Calu3 (cell line): ENCODE measurements at regions of chr6 and their contacts with region 1.

Region 1: GRCh38 chr6:81752138-81752920 is at the start of gene TENT5A:
- DNase-seq: peak; percentile 94
- H3K4me3 Mint-ChIP-seq: peak within 1 kb of the TSS; percentile 98
- H3K27ac Mint-ChIP-seq: peak within 1 kb of the TSS; percentile 54
- H3K4me1 Mint-ChIP-seq: peaks cover 33% of the 10 kb centered on the region
- H3K27me3 Mint-ChIP-seq: peaks cover 9% of the 10 kb centered on the region
- CTCF ChIP-seq: no peak
- total RNA-seq, gene TENT5A: 9.7 and 17.4 TPM in 2 replicates

Region 2: DNA sequence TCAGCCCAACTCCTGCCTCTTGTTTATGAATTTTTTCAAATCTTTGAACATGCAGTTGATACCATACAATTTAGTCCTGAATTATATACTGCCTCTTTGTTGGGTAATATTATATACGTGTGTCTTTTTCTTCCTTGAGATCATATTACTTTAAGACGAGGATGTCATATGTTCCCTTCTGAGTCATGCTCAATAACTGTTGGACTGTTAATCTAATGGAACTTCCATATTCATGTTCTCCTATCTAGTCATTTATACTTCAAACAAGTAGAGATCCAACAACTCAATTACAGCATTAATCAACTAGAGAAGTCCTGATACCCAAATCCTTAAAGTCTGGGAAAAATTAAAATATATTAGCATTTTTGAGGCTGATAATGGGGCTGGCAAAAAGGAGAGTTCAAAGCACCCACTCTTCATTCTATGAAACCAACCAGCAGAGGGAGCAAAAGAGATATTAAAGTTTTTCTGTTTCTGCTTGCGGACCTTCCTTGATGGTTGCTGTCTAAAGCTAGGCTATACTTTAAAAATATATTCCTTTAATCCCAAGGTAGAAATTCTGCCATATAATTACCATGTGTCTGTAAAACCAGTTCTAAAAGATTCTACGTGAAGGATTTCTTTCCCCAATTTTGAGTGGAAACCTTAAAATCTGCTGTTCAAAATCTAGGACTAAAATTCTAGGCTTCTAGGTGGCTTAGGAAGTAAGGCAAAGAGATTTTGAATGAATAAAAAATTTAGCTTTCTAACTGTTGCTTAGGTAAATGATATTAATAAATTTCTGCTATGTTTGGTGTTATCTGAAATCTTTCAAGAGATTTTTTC is 1147.0 kb before region 1 on chr6:
- CTCF ChIA-PET with region 1: no interaction called
- intact Hi-C with region 1: loop called (anchors 5 kb)
- DNase-seq: peak; percentile 46
- H3K4me3 Mint-ChIP-seq: no peak overlapping the region
- H3K27ac Mint-ChIP-seq: peak overlapping the region; percentile 27
- H3K4me1 Mint-ChIP-seq: peaks cover 29% of the 10 kb centered on the region
- H3K27me3 Mint-ChIP-seq: no peaks in the 10 kb centered on the region
- CTCF ChIP-seq: peak; percentile 62

Region 3: DNA sequence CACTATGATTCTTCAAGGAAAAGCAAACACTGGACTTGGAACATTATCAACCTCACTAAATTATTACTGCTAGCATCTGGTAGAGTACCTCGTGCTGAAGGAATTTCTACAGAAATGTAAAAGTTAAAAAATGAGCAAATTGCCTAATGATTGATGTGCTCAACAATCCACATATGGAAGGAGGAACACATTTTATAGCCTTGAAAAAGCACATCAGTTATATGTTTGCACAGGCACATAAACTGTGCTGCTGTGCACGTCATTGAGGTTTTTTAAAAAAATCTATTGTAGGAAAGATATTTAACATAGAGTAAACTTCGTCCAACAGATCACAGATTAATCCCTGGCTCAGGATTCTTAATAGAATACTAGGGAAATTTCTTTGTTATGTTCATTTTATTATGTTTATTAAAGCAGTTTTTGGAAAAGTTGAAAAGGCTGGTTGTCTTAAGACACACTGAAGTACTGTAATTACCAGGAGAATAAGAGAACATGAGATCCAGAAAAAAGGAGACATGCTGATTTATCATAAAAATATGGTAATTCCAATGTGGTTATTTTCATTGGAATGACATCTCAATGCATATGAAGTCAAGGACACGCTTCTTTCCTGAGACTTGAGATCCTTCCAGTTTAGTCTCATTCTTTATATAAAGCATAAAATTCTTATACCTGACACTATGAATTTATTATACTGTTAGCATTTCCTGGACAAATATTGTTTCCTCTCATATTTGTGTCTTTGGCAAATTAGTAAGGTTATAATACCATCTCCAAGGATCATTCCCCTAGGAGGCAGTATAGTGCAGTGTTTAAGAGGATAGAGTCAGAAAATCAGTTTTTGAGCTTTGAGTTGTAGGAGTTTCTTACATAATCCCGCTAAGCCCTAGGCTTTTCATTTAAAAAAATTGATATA is 510.9 kb before region 1 on chr6:
- CTCF ChIA-PET with region 1: interaction called, 3 read pairs
- intact Hi-C with region 1: loop called (anchors 5 kb)
- DNase-seq: no peak
- H3K4me3 Mint-ChIP-seq: no peak overlapping the region
- H3K27ac Mint-ChIP-seq: no peak overlapping the region
- H3K4me1 Mint-ChIP-seq: no peaks in the 10 kb centered on the region
- H3K27me3 Mint-ChIP-seq: no peaks in the 10 kb centered on the region
- CTCF ChIP-seq: peak; percentile 10

Region 4: GRCh38 chr6:81562169-81562568 is 190.2 kb before region 1 on chr6:
- CTCF ChIA-PET with region 1: no interaction called
- intact Hi-C with region 1: loop called (anchors 5 kb)
- DNase-seq: peak; percentile 16
- H3K4me3 Mint-ChIP-seq: peak overlapping the region; percentile 47
- H3K27ac Mint-ChIP-seq: peak overlapping the region; percentile 66
- H3K4me1 Mint-ChIP-seq: peaks cover 16% of the 10 kb centered on the region
- H3K27me3 Mint-ChIP-seq: no peaks in the 10 kb centered on the region
- CTCF ChIP-seq: no peak

Region 5: DNA sequence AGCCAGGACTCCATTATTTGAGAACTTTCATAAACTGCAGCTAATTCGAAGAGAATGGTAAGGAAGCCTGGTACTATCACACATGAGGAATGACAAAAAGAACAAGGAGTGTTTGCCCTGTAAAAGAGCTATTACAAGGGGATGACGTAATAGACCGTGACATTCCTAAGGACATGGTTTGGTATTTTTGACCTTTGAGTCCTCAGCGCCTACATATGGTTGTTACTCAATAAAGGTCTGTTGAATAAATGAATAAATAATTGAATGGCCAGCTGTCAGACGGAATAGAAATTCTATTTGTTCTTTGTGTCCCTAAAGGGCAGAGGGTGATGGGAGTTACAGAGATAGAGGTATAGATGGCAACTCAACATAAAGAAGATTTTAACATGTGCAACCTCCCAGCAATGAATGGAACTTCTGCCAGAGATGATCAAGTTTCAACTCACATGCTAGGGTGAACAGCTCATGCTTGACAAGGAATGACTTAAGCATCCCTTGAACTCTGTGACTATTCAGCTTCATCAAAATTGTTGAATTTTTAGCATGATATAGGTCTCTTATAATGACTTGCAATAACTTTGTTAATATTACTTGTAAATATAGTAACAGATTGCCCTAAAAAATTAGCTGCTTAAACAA is 115.3 kb before region 1 on chr6:
- CTCF ChIA-PET with region 1: no interaction called
- intact Hi-C with region 1: no loop called
- DNase-seq: no peak
- H3K4me3 Mint-ChIP-seq: no peak overlapping the region
- H3K27ac Mint-ChIP-seq: no peak overlapping the region
- H3K4me1 Mint-ChIP-seq: no peaks in the 10 kb centered on the region
- H3K27me3 Mint-ChIP-seq: no peaks in the 10 kb centered on the region
- CTCF ChIP-seq: no peak

Region 6: DNA sequence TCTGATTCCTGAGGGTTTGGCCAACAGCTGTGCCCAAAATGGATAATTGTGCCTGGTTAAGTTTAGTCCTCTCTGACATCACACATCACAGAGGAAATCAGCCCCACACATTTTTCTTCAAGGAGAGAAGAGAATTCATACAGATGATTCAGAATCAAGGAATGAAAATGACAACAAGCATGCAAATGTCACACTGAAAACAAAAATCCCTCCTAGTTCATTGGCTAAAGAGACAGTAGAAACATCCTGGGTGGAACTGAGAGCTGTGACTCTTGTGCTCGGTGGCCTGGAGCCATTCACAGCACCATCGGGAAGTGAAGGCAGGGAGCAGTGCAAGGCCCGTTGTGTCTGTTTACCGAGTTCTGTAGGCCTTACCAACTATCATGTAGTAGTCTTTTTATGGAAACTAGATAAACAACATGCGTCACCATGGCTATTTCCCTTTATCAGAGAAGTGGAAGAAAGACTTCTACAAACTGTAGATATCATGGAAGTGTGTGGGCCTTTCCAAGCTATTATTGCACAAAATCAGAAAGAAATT is 81.9 kb after region 1 on chr6:
- CTCF ChIA-PET with region 1: no interaction called
- intact Hi-C with region 1: loop called (anchors 5 kb)
- DNase-seq: peak; percentile 16
- H3K4me3 Mint-ChIP-seq: no peak overlapping the region
- H3K27ac Mint-ChIP-seq: no peak overlapping the region
- H3K4me1 Mint-ChIP-seq: peaks cover 39% of the 10 kb centered on the region
- H3K27me3 Mint-ChIP-seq: no peaks in the 10 kb centered on the region
- CTCF ChIP-seq: no peak

Region 7: DNA sequence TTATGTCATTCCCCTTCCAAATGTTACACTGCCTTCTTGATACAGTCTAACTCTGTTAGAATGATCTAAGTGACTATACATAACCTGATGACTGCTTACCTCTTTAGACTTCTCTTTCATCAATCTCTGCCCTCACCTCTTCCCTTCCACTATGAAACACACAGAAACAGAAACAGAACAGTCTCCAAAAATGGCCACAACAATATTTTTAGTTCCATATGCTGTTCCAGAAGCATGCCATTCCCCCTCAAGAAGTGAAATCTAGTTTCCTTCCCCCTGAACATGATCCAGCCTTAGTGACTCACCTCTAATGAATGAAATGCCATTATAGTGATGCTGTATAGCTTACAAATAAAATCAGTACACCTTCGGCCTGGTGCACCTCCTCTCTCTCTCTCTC is 229.5 kb after region 1 on chr6:
- CTCF ChIA-PET with region 1: interaction called, 3 read pairs
- intact Hi-C with region 1: loop called (anchors 2 kb)
- DNase-seq: peak; percentile 23
- H3K4me3 Mint-ChIP-seq: no peak overlapping the region
- H3K27ac Mint-ChIP-seq: peak overlapping the region; percentile 53
- H3K4me1 Mint-ChIP-seq: peaks cover 17% of the 10 kb centered on the region
- H3K27me3 Mint-ChIP-seq: no peaks in the 10 kb centered on the region
- CTCF ChIP-seq: no peak